ENCODE measurements at regions of chr18 and their contacts with region 1.

Region 1: GRCh38 chr18:48675352-48675761 is 136.5 kb downstream of the CTIF start:
- DNase-seq: peak; percentile 57 to 84 (median 78)
- ATAC-seq: peak; percentile 97
- H3K4me3 ChIP-seq: no peak overlapping the region
- H3K4me3 Mint-ChIP-seq: no peak overlapping the region
- H3K27ac ChIP-seq: no peak overlapping the region
- H3K27ac Mint-ChIP-seq: no peak overlapping the region
- H3K4me1 ChIP-seq: no peaks in the 10 kb centered on the region
- H3K4me1 Mint-ChIP-seq: peaks cover 0 to 12% (median 0%) of the 10 kb centered on the region in 7 donors
- H3K27me3 ChIP-seq: no peaks in the 10 kb centered on the region
- H3K27me3 Mint-ChIP-seq: no peaks in the 10 kb centered on the region

Region 2: DNA sequence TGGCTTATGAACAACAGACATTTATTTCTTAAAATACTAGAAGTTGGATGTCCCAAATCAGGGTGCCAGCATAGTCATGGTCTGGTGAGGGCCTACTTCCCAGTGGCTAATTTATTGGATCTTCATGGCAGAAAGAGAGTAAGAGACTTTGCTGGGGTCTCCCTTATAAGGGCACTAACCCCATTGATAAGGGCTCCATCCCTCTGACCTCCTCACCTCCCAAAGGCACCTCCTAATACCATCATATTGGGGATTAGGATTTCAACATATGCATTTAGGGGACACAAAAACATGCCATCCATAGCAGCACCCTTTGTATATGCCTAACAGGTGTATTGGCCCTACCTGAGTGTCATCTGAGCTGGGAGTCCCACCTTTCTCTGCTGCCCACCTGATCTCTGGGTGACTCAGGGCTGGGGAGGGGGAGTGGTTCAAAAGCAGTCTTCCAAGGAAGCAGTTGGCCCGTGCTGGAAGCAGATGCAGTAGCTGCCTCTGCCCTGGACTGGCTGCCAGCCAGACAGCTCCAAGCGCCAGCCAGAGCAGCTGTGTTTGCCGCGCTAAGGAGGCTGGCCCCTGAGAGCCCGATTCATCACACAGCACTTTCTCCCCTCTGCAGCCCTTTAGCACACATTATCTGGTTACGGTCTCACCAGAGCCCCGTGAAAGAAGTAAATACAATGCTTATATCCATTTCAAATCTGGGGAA is 190.8 kb after region 1 on chr18:
- CTCF ChIA-PET with region 1: no interaction called
- POLR2A ChIA-PET with region 1: no interaction called
- intact Hi-C with region 1: no loop called
- DNase-seq: no peak
- ATAC-seq: no peak
- H3K4me3 ChIP-seq: no peak overlapping the region
- H3K4me3 Mint-ChIP-seq: no peak overlapping the region
- H3K27ac ChIP-seq: no peak overlapping the region
- H3K27ac Mint-ChIP-seq: no peak overlapping the region
- H3K4me1 ChIP-seq: peaks cover 0 to 41% of the 10 kb centered on the region in 2 donors
- H3K4me1 Mint-ChIP-seq: peaks cover 7 to 18% (median 11%) of the 10 kb centered on the region in 7 donors
- H3K27me3 ChIP-seq: no peaks in the 10 kb centered on the region
- H3K27me3 Mint-ChIP-seq: no peaks in the 10 kb centered on the region

Region 3: GRCh38 chr18:48940854-48941611 is 265.7 kb after region 1 on chr18:
- CTCF ChIA-PET with region 1: no interaction called
- POLR2A ChIA-PET with region 1: no interaction called
- intact Hi-C with region 1: loop called in 1 of 2 experiments (anchors 5 kb)
- DNase-seq: peak; percentile 53 to 98 (median 96)
- ATAC-seq: peak; percentile 91
- H3K4me3 ChIP-seq: peak overlapping the region; percentile 36
- H3K4me3 Mint-ChIP-seq: peak overlapping the region; percentile 78 to 94 (median 86)
- H3K27ac ChIP-seq: peak overlapping the region; percentile 49
- H3K27ac Mint-ChIP-seq: peak overlapping the region; percentile 80 to 98 (median 93)
- H3K4me1 ChIP-seq: peaks cover 64 to 85% of the 10 kb centered on the region in 2 donors
- H3K4me1 Mint-ChIP-seq: peaks cover 59 to 100% (median 95%) of the 10 kb centered on the region in 7 donors
- H3K27me3 ChIP-seq: no peaks in the 10 kb centered on the region
- H3K27me3 Mint-ChIP-seq: no peaks in the 10 kb centered on the region

Region 4: GRCh38 chr18:49021433-49022129 is 346.2 kb after region 1 on chr18:
- CTCF ChIA-PET with region 1: no interaction called
- POLR2A ChIA-PET with region 1: no interaction called
- intact Hi-C with region 1: loop called in 1 of 2 experiments (anchors 5 kb)
- DNase-seq: peak in 1 of 9 donors; percentile 52
- ATAC-seq: peak; percentile 60
- H3K4me3 ChIP-seq: no peak overlapping the region
- H3K4me3 Mint-ChIP-seq: no peak overlapping the region
- H3K27ac ChIP-seq: no peak overlapping the region
- H3K27ac Mint-ChIP-seq: no peak overlapping the region
- H3K4me1 ChIP-seq: no peaks in the 10 kb centered on the region
- H3K4me1 Mint-ChIP-seq: peaks cover 0 to 11% (median 0%) of the 10 kb centered on the region in 7 donors
- H3K27me3 ChIP-seq: no peaks in the 10 kb centered on the region
- H3K27me3 Mint-ChIP-seq: no peaks in the 10 kb centered on the region

Region 5: GRCh38 chr18:49238433-49239042 is 563.2 kb after region 1 on chr18:
- CTCF ChIA-PET with region 1: no interaction called
- POLR2A ChIA-PET with region 1: no interaction called
- intact Hi-C with region 1: loop called (anchors 1 to 2 kb)
- DNase-seq: peak in 1 of 9 donors; percentile 2
- ATAC-seq: peak; percentile 29
- H3K4me3 ChIP-seq: no peak overlapping the region
- H3K4me3 Mint-ChIP-seq: no peak overlapping the region
- H3K27ac ChIP-seq: no peak overlapping the region
- H3K27ac Mint-ChIP-seq: no peak overlapping the region
- H3K4me1 ChIP-seq: no peaks in the 10 kb centered on the region
- H3K4me1 Mint-ChIP-seq: peaks cover 0 to 3% (median under 1%) of the 10 kb centered on the region in 7 donors
- H3K27me3 ChIP-seq: no peaks in the 10 kb centered on the region
- H3K27me3 Mint-ChIP-seq: no peaks in the 10 kb centered on the region

Region 6: DNA sequence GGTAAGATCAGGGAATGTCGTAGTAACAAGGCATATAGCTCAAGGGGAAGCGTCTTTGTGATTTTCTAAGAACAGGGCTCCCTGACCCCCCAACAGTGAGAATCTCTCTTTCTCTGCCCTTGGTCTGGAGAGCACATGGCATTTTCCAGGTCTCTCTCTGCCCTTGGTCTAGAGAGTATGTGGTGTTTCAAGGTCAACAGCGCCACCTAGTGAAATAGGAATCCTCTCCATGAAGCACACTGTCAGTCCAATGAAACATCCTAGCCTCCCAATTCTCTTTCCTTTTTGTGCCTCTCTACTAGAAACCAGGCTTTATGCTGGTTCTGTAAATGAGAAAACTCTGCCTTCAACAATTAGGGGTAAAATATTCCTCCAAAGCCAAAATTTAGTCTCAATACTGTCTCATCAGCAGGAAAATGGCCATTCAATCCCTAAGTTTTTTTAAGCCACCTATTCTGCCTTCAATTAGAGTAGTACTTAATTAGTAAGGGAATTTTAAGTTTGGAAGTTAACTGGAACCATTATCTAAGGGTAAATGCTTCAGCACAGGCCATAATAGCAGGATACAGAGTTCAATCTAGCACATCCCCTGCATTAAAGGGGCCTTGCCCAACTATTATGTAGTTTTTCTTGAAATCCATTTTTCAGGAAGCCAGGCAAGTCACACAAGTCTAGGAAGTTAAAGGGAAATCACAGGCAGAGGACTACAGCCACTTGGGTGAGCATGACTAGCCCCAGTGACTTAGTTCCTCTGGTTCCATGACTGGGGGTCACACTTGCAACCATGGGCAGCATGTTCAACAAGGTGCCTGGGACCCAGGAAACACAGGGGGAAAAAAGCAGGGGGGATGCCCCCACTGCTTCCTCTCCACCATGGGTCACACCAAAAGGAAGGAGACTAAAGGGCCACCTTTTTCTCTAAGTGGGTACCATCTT is 772.7 kb after region 1 on chr18:
- CTCF ChIA-PET with region 1: interaction called, 3 read pairs
- POLR2A ChIA-PET with region 1: no interaction called
- intact Hi-C with region 1: loop called (anchors 1 kb)
- DNase-seq: peak in 8 of 9 donors; percentile 8 to 63 (median 28)
- ATAC-seq: peak; percentile 57
- H3K4me3 ChIP-seq: no peak overlapping the region
- H3K4me3 Mint-ChIP-seq: no peak overlapping the region
- H3K27ac ChIP-seq: no peak overlapping the region
- H3K27ac Mint-ChIP-seq: no peak overlapping the region
- H3K4me1 ChIP-seq: no peaks in the 10 kb centered on the region
- H3K4me1 Mint-ChIP-seq: peaks cover 11 to 48% (median 30%) of the 10 kb centered on the region in 7 donors
- H3K27me3 ChIP-seq: no peaks in the 10 kb centered on the region
- H3K27me3 Mint-ChIP-seq: no peaks in the 10 kb centered on the region

Region 7: GRCh38 chr18:49858309-49859020 is 1183.1 kb after region 1 on chr18:
- CTCF ChIA-PET with region 1: interaction called, 3 read pairs
- POLR2A ChIA-PET with region 1: no interaction called
- intact Hi-C with region 1: loop called (anchors 1 to 10 kb)
- DNase-seq: peak; percentile 13 to 68 (median 33)
- ATAC-seq: no peak
- H3K4me3 ChIP-seq: no peak overlapping the region
- H3K4me3 Mint-ChIP-seq: no peak overlapping the region
- H3K27ac ChIP-seq: no peak overlapping the region
- H3K27ac Mint-ChIP-seq: peak overlapping the region in 2 of 9 donors; percentile 38 to 72
- H3K4me1 ChIP-seq: no peaks in the 10 kb centered on the region
- H3K4me1 Mint-ChIP-seq: peaks cover 0 to 6% (median 0%) of the 10 kb centered on the region in 7 donors
- H3K27me3 ChIP-seq: no peaks in the 10 kb centered on the region
- H3K27me3 Mint-ChIP-seq: peaks cover 0 to 3% (median 0%) of the 10 kb centered on the region in 5 donors

Measured in naive thymus-derived CD4-positive, alpha-beta T cell (primary cell).